Prostate gland (tissue), 2 donors: ENCODE measurements at regions of chr10 and their contacts with region 1.

Region 1: DNA sequence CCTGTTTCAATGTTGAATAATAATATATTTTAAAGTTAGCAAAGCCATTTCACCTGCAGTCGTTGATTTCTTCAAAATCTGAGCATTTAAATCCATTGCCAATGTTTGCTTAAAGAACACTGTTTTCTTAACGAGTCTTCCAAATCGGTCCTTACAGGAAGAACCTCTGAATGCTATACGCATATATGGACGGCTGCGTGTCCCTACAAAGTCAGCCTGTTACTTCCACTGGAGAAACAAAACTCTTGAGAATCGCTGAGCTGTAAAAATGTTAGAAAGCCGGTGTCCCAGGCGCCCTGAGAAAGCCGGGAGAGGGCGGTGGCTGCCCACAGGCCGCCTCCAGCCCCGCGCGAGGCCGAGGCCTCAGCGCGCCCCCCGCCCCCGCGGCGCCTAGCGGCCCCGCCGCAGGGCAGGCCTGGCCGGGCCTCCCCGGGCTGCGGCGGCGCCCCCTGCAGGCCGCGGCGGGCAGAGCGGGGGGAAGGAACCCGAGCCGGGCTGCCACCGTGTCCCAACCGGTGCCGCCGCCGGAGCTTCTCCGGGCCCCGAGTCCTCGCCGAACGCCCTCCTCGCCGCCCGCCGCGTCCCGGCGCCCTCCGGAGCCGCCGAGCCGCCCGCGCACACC is at the start of gene FHIP2A:
- DNase-seq: peak; percentile 64
- H3K4me3 ChIP-seq: peak within 1 kb of the TSS; percentile 84 to 95
- H3K27ac ChIP-seq: peak within 1 kb of the TSS; percentile 96 to 97
- H3K4me1 ChIP-seq: no peaks in the 10 kb centered on the region
- H3K27me3 ChIP-seq: no peaks in the 10 kb centered on the region
- CTCF ChIP-seq: peak; percentile 28 to 82 (median 50)
- POLR2A ChIP-seq: no peak
- total RNA-seq, gene FHIP2A: 22.1 to 41.0 TPM

Region 2: DNA sequence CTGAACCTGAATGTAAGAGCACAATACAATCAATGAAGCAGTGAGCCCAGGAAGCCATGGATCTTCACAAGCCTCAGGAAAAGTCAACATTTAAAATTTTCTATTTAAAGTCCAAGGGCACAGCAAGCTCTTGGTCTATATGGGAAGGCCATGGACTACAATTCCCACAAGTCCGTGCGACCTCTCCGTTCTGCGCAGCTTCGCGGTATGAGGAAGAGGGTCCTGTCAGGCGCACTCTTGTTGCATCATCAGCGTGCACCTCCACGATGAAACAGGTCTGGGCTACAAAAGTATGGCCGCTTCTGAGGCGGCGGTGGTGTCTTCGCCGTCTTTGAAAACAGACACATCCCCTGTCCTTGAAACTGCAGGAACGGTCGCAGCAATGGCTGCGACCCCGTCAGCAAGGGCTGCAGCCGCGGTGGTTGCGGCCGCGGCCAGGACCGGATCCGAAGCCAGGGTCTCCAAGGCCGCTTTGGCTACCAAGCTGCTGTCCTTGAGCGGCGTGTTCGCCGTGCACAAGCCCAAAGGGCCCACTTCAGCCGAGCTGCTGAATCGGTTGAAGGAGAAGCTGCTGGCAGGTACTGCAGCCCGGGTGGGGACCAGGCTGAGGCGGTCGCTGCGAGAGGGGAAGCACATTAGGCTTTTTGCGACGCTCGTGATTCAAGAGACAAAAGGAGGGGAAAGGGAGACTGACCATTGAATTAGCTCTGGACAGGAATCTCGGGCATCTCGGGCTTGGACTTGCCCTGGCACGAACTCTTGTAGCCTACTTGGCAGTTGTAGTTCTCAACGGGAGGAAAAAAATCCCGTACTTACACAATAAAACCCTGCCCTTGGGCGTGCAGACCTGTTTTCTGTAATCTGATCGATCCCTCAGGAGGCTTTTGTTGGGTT is 116.8 kb after region 1 on chr10 and contains the start of gene TRUB1:
- intact Hi-C with region 1: loop called (anchors 5 kb)
- DNase-seq: peak; percentile 97
- H3K4me3 ChIP-seq: peak within 1 kb of the TSS; percentile 87 to 94
- H3K27ac ChIP-seq: peak within 1 kb of the TSS; percentile 58 to 69
- H3K4me1 ChIP-seq: no peaks in the 10 kb centered on the region
- H3K27me3 ChIP-seq: no peaks in the 10 kb centered on the region
- CTCF ChIP-seq: no peak
- POLR2A ChIP-seq: peak; percentile 47
- total RNA-seq, gene TRUB1: 24.7 to 29.1 TPM